ENCODE measurements at regions of chr18 and their contacts with region 1.

Region 1: GRCh38 chr18:45664824-45665763 is 49.8 kb downstream of the SLC14A2 start:
- DNase-seq: peak; percentile 61 to 71 (median 66)
- H3K4me3 ChIP-seq: no peak overlapping the region
- H3K4me3 Mint-ChIP-seq: peak overlapping the region in 7 of 8 donors; percentile 21 to 80 (median 61)
- H3K27ac ChIP-seq: no peak overlapping the region
- H3K27ac Mint-ChIP-seq: peak overlapping the region; percentile 47 to 91 (median 88)
- H3K4me1 ChIP-seq: peaks cover 56% of the 10 kb centered on the region
- H3K4me1 Mint-ChIP-seq: peaks cover 42 to 63% (median 52%) of the 10 kb centered on the region in 4 donors
- H3K27me3 ChIP-seq: no peaks in the 10 kb centered on the region
- H3K27me3 Mint-ChIP-seq: no peaks in the 10 kb centered on the region

Region 2: GRCh38 chr18:45677276-45677807 is 12.2 kb after region 1 on chr18:
- CTCF ChIA-PET with region 1: interaction called, 19 read pairs
- POLR2A ChIA-PET with region 1: interaction called, 6 read pairs
- intact Hi-C with region 1: no loop called
- DNase-seq: no peak
- H3K4me3 ChIP-seq: no peak overlapping the region
- H3K4me3 Mint-ChIP-seq: no peak overlapping the region
- H3K27ac ChIP-seq: no peak overlapping the region
- H3K27ac Mint-ChIP-seq: no peak overlapping the region
- H3K4me1 ChIP-seq: peaks cover 6% of the 10 kb centered on the region
- H3K4me1 Mint-ChIP-seq: peaks cover 2 to 9% (median 6%) of the 10 kb centered on the region in 4 donors
- H3K27me3 ChIP-seq: no peaks in the 10 kb centered on the region
- H3K27me3 Mint-ChIP-seq: no peaks in the 10 kb centered on the region

Region 3: GRCh38 chr18:45802608-45803492 is 137.8 kb after region 1 on chr18:
- CTCF ChIA-PET with region 1: interaction called, 38 read pairs
- POLR2A ChIA-PET with region 1: interaction called, 3 read pairs
- intact Hi-C with region 1: loop called (anchors 1 kb)
- DNase-seq: no peak
- H3K4me3 ChIP-seq: no peak overlapping the region
- H3K4me3 Mint-ChIP-seq: no peak overlapping the region
- H3K27ac ChIP-seq: no peak overlapping the region
- H3K27ac Mint-ChIP-seq: no peak overlapping the region
- H3K4me1 ChIP-seq: no peaks in the 10 kb centered on the region
- H3K4me1 Mint-ChIP-seq: peaks cover 0 to 4% (median 0%) of the 10 kb centered on the region in 4 donors
- H3K27me3 ChIP-seq: no peaks in the 10 kb centered on the region
- H3K27me3 Mint-ChIP-seq: peaks cover 9 to 10% of the 10 kb centered on the region in 2 donors

Region 4: DNA sequence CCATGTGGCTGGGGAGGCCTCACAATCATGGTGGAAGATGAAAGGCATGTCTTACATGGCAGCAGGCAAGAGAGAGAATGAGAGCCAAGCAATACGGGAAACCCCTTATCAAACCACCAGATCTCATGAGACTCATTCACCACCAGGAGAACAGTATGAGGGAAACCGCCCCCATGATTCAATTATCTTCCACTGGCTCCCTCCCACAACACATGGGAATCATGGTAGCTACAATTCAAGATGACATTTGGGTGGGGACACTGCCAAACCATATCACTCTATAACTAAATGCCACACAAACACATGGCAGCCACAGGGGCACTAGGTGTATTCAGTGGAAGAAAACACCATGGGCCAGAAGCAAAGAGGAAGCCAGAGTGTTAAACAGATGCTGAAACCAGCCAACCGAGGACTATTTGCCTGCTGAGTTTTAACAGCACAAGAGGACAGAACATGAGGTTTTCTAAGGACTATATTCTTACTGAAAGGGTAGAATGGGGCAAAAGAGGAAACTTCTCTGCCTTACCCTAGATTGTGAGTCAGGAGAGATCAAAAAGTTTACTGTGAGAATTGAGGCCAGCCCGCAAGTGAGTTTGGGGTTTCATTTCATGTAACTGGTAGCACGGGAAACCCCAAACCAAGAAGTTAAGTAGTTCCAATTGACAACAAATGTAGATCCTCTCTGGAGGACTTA is 209.5 kb after region 1 on chr18:
- CTCF ChIA-PET with region 1: interaction called, 342 read pairs
- POLR2A ChIA-PET with region 1: interaction called, 39 read pairs
- intact Hi-C with region 1: no loop called
- DNase-seq: peak; percentile 57 to 77 (median 65)
- H3K4me3 ChIP-seq: peak overlapping the region in 1 of 2 donors; percentile 26
- H3K4me3 Mint-ChIP-seq: peak overlapping the region in 7 of 8 donors; percentile 23 to 74 (median 42)
- H3K27ac ChIP-seq: peak overlapping the region; percentile 29
- H3K27ac Mint-ChIP-seq: peak overlapping the region; percentile 71 to 88 (median 86)
- H3K4me1 ChIP-seq: peaks cover 25% of the 10 kb centered on the region
- H3K4me1 Mint-ChIP-seq: peaks cover 18 to 30% (median 28%) of the 10 kb centered on the region in 4 donors
- H3K27me3 ChIP-seq: no peaks in the 10 kb centered on the region
- H3K27me3 Mint-ChIP-seq: no peaks in the 10 kb centered on the region

Region 5: GRCh38 chr18:45967007-45967706 is 302.1 kb after region 1 on chr18 and contains the start of gene EPG5:
- CTCF ChIA-PET with region 1: interaction called, 10 read pairs
- POLR2A ChIA-PET with region 1: no interaction called
- intact Hi-C with region 1: no loop called
- DNase-seq: peak; percentile 89 to 94 (median 91)
- H3K4me3 ChIP-seq: peak within 1 kb of the TSS; percentile 89 to 94
- H3K4me3 Mint-ChIP-seq: peak within 1 kb of the TSS; percentile 95 to 100 (median 98)
- H3K27ac ChIP-seq: peak within 1 kb of the TSS; percentile 72
- H3K27ac Mint-ChIP-seq: peak within 1 kb of the TSS; percentile 89 to 98 (median 97)
- H3K4me1 ChIP-seq: peaks cover 48% of the 10 kb centered on the region
- H3K4me1 Mint-ChIP-seq: peaks cover 31 to 55% (median 42%) of the 10 kb centered on the region in 4 donors
- H3K27me3 ChIP-seq: no peaks in the 10 kb centered on the region
- H3K27me3 Mint-ChIP-seq: no peaks in the 10 kb centered on the region
- total RNA-seq, gene EPG5: 64.3 to 69.0 TPM